Caco-2 (cell line): ENCODE measurements at regions of chr2 and their contacts with region 1.

Region 1: GRCh38 chr2:200525882-200526651 is at the start of gene SGO2:
- DNase-seq: peak; percentile 97
- H3K4me3 ChIP-seq: peak within 1 kb of the TSS; percentile 67
- H3K4me3 Mint-ChIP-seq: peak within 1 kb of the TSS; percentile 84
- H3K27ac Mint-ChIP-seq: peak within 1 kb of the TSS; percentile 89
- H3K4me1 ChIP-seq: peaks cover 15% of the 10 kb centered on the region; the same call in 1 of the 2 replicates
- H3K4me1 Mint-ChIP-seq: peaks cover 20% of the 10 kb centered on the region
- H3K27me3 ChIP-seq: no peaks in the 10 kb centered on the region
- H3K27me3 Mint-ChIP-seq: no peaks in the 10 kb centered on the region
- CTCF ChIP-seq: no peak
- total RNA-seq, gene SGO2: 20.1 and 21.3 TPM in 2 replicates

Region 2: GRCh38 chr2:199973703-199974102 is 552.4 kb before region 1 on chr2:
- CTCF ChIA-PET with region 1: no interaction called
- POLR2A ChIA-PET with region 1: interaction called, 4 read pairs
- intact Hi-C with region 1: loop called (anchors 1 kb)
- DNase-seq: no peak
- H3K4me3 ChIP-seq: no peak overlapping the region
- H3K4me3 Mint-ChIP-seq: no peak overlapping the region
- H3K27ac Mint-ChIP-seq: no peak overlapping the region
- H3K4me1 ChIP-seq: peaks cover 14% of the 10 kb centered on the region
- H3K4me1 Mint-ChIP-seq: peaks cover 15% of the 10 kb centered on the region
- H3K27me3 ChIP-seq: no peaks in the 10 kb centered on the region
- H3K27me3 Mint-ChIP-seq: no peaks in the 10 kb centered on the region
- CTCF ChIP-seq: peak; percentile 46 to 76

Region 3: DNA sequence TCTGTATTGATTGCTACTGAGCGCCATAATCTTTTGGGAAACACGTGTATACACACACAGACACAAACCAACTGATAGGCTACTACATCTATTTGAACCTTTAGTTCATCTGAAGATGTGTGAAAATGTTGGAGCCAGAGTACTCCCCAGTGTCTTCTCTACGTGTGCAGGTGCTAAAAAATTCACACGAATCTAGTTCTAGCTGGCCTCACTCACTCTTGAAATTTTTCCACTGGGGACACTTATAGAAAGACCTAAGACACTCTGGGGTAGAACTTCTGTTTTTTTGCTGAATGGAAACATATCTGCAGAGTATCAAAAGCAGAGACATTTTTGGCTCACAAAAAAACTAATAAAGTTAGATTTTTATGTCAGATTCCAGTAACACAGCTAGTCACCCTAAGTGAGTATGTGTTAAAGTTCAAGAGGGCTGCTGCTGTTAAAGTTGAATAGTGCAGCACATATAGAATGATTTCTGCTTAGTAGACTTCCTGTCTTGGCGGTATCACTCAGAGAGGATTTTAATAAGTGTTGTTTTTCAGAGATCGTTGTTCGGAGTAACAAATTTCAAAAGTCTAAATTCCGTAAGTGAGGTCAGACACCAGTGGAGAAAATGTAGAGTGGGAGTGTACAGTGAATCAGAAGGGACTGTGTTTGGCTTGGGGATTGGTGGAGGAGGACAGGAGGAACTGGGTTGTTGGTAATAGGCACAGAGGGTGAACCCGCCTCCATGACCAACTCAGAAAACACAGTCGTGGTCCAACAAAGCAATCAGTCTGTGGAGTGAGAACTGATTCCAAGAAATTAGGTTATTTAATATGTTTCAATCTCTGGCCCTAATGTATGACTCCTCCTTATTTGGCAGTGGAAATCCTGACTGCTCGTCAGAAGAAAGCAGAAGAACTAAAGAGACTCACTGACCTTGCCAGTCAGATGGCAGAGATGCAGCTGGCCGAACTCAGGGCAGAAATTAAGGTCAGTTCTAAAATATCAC is 59.3 kb before region 1 on chr2:
- CTCF ChIA-PET with region 1: no interaction called
- POLR2A ChIA-PET with region 1: no interaction called
- intact Hi-C with region 1: no loop called
- DNase-seq: no peak
- H3K4me3 ChIP-seq: no peak overlapping the region
- H3K4me3 Mint-ChIP-seq: no peak overlapping the region
- H3K27ac Mint-ChIP-seq: no peak overlapping the region
- H3K4me1 ChIP-seq: no peaks in the 10 kb centered on the region
- H3K4me1 Mint-ChIP-seq: no peaks in the 10 kb centered on the region
- H3K27me3 ChIP-seq: no peaks in the 10 kb centered on the region
- H3K27me3 Mint-ChIP-seq: no peaks in the 10 kb centered on the region
- CTCF ChIP-seq: no peak

Region 4: DNA sequence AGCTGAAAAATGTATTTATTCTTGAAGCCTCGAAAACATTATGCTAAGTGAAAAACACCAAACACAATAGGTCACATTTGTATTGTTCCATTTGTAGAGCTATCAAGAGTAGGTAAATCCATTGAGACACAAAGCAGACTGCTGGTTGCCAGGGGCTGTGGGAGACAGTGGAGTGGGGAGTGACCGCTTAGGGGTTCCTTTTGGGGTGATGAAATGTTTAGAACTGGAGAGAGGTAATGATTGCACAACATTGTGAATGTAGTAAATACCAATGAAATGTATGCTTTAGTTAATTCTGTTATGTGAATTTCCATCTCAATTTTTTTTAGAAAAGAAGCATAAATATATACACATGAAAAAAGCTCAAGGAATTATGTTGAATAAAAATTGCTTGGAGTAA is 32.0 kb before region 1 on chr2:
- CTCF ChIA-PET with region 1: no interaction called
- POLR2A ChIA-PET with region 1: interaction called, 14 read pairs
- intact Hi-C with region 1: no loop called
- DNase-seq: no peak
- H3K4me3 ChIP-seq: no peak overlapping the region
- H3K4me3 Mint-ChIP-seq: no peak overlapping the region
- H3K27ac Mint-ChIP-seq: no peak overlapping the region
- H3K4me1 ChIP-seq: no peaks in the 10 kb centered on the region
- H3K4me1 Mint-ChIP-seq: no peaks in the 10 kb centered on the region
- H3K27me3 ChIP-seq: no peaks in the 10 kb centered on the region
- H3K27me3 Mint-ChIP-seq: no peaks in the 10 kb centered on the region
- CTCF ChIP-seq: no peak

Region 5: DNA sequence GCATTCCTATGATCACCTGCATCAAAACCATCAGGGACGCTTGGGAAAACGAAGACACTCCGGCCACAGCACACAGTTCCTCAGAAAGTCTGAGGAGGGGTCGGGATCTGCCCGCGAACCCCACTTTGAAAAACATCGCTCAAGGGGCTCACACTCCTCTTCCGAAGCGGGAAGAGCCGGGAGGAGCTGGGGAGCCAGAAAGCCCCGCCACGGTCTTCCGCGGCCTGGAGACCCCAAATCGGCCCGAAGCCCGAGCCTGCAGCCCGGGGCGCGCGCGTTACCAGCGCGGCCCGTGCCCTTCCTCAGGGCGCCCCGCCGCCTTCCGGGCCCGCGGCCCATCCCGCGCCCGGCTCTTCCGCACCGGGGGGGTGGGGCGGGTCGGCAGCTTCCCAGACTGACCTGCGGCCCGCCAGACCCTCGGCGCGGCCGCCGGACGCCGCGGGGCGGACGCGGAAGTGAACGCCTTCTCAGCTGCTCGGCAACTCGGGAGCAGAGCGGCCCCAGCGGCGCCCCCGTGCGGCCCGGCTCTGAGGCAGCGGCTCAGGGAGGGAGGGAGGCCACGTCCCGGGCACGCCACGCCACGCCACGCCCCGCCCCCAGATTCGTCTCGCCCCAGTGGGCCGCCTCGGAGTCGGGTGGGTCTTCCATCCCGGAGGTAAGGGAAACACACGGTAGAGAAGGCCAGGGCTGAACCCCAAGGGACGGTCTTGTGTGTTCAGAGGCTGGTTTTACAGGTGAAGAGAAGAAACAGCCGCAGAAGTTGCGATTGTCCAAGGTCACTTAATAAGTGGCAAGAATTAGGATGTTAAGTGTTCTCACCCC is 16.2 kb before region 1 on chr2 and contains the start of gene KCTD18:
- CTCF ChIA-PET with region 1: no interaction called
- POLR2A ChIA-PET with region 1: interaction called, 10 read pairs
- intact Hi-C with region 1: loop called (anchors 1 kb)
- DNase-seq: peak; percentile 92 to 96
- H3K4me3 ChIP-seq: peak within 1 kb of the TSS; percentile 72
- H3K4me3 Mint-ChIP-seq: peak within 1 kb of the TSS; percentile 77
- H3K27ac Mint-ChIP-seq: peak within 1 kb of the TSS; percentile 80
- H3K4me1 ChIP-seq: peaks cover 19% of the 10 kb centered on the region
- H3K4me1 Mint-ChIP-seq: peaks cover 7% of the 10 kb centered on the region
- H3K27me3 ChIP-seq: no peaks in the 10 kb centered on the region
- H3K27me3 Mint-ChIP-seq: no peaks in the 10 kb centered on the region
- CTCF ChIP-seq: peak; percentile 88
- total RNA-seq, gene KCTD18: 8.6 and 9.3 TPM in 2 replicates

Region 6: DNA sequence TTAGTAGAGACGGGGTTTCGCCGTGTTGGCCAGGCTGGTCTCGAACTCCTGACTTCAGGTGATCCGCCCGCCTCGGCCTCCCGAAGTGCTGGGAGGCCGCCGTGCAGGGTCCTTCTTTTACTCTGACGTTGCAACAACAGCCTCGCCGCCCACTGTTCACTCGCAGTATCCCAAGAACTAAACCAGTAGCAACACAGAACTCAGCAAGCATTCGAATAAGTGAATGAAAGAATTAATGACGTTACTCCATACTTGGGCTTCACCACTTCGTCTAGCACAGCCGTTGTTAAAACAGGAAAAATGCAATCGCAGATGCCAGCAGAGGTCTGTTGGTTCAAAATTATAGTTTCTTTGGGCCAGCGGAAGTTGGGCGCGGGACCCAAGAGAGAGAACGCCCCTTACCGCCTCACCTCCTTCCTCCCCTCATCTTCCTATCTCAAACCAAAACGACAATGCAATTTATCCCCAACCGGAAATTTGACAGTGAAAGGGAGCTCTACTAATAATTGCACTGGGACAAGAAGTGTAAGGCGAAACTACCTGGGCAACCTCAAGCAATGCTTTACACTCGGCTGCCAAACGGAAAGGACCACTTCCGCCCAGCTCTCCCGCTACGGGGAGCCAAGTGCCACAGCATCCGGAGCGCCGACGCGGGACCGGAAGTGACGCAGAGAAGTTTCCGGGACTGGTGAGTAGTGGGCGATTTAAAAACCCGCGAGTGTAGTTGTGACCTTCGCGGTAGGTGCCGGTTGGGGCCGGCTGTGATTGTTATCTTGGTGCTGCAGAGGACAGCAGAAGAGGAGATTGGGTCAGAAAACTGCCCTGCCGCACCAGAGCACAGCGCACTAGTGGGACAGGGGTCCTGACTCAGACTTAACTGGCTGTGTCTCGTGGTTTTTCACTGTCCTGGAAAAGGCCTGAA is 362.9 kb after region 1 on chr2 and contains the starts of genes NIF3L1 and PPIL3:
- CTCF ChIA-PET with region 1: no interaction called
- POLR2A ChIA-PET with region 1: no interaction called
- intact Hi-C with region 1: loop called (anchors 1 kb)
- DNase-seq: peak; percentile 98 to 99
- H3K4me3 ChIP-seq: peak within 1 kb of the TSS; percentile 56
- H3K4me3 Mint-ChIP-seq: peak within 1 kb of the TSS; percentile 89
- H3K27ac Mint-ChIP-seq: peak within 1 kb of the TSS; percentile 97
- H3K4me1 ChIP-seq: 0 out of 2 replicates have a peak, but pooled peaks cover 3% of the 10 kb centered on the region
- H3K4me1 Mint-ChIP-seq: peaks cover 19% of the 10 kb centered on the region
- H3K27me3 ChIP-seq: no peaks in the 10 kb centered on the region
- H3K27me3 Mint-ChIP-seq: no peaks in the 10 kb centered on the region
- CTCF ChIP-seq: no peak
- total RNA-seq, gene NIF3L1: 40.7 and 49.7 TPM in 2 replicates
- total RNA-seq, gene PPIL3: 17.6 and 25.0 TPM in 2 replicates